Activated naive CD4-positive, alpha-beta T cell treated with anti-CD3 and anti-CD28 coated beads for 36 hours (primary cell): ENCODE measurements at regions of chr5 and their contacts with region 1.

Region 1: GRCh38 chr5:150000256-150000989 is at the starts of genes HMGXB3 and TIGD6:
- DNase-seq: peak; percentile 91
- H3K4me3 Mint-ChIP-seq: peak within 1 kb of the TSS; percentile 86
- H3K27ac Mint-ChIP-seq: peak within 1 kb of the TSS; percentile 85
- H3K4me1 Mint-ChIP-seq: peaks cover 39% of the 10 kb centered on the region
- H3K27me3 Mint-ChIP-seq: no peaks in the 10 kb centered on the region
- total RNA-seq, gene HMGXB3: 24.3 to 26.8 TPM
- total RNA-seq, gene TIGD6: 2.6 to 2.7 TPM

Region 2: GRCh38 chr5:148113243-148113642 is 1887.2 kb before region 1 on chr5:
- CTCF ChIA-PET with region 1: no interaction called
- intact Hi-C with region 1: no loop called
- DNase-seq: no peak
- H3K4me3 Mint-ChIP-seq: no peak overlapping the region
- H3K27ac Mint-ChIP-seq: no peak overlapping the region
- H3K4me1 Mint-ChIP-seq: no peaks in the 10 kb centered on the region
- H3K27me3 Mint-ChIP-seq: no peaks in the 10 kb centered on the region

Region 3: GRCh38 chr5:149357370-149358293 is 642.8 kb before region 1 on chr5 and contains the start of gene PCYOX1L:
- CTCF ChIA-PET with region 1: no interaction called
- intact Hi-C with region 1: loop called (anchors 1 kb)
- DNase-seq: peak; percentile 95
- H3K4me3 Mint-ChIP-seq: peak within 1 kb of the TSS; percentile 95
- H3K27ac Mint-ChIP-seq: peak within 1 kb of the TSS; percentile 90
- H3K4me1 Mint-ChIP-seq: peaks cover 61% of the 10 kb centered on the region
- H3K27me3 Mint-ChIP-seq: no peaks in the 10 kb centered on the region
- total RNA-seq, gene PCYOX1L: 19.9 to 21.0 TPM

Region 4: DNA sequence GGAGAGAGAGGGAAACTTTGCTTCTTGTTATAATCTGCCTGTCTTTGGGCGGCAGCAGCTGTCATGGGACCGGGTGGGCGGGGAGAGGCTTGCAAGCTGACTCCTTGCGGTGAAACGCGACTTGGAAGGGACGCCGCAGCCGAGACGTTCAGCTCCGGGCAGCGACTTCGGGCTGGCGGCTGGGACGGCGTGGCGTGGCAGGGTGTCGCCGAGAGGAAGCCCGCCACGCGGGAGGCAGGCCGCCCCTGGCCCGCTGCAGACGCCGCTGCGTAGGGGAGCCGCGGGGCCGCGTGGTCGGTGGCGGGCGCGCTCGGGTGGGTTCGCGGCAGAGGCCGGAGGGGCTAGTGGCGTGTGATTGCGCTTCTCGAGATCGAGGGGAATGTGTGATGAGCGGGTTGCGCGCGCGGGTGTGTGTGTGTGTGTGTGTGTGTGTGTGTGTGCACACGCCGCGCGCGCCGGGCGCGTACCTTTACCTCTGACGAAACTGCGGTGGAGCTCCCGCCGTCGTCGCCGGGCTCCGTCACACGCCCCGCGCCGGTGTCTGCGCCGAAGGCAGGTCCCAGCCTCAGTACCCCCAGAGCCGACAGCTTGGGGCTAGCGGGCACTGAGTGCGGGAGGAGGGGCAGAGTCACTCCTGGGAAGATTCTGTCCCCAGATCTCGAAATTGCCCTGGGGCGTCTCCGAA is 268.6 kb before region 1 on chr5:
- CTCF ChIA-PET with region 1: no interaction called
- intact Hi-C with region 1: loop called (anchors 2 kb)
- DNase-seq: peak; percentile 90
- H3K4me3 Mint-ChIP-seq: peak overlapping the region; percentile 81
- H3K27ac Mint-ChIP-seq: peak overlapping the region; percentile 56
- H3K4me1 Mint-ChIP-seq: peaks cover 4% of the 10 kb centered on the region
- H3K27me3 Mint-ChIP-seq: no peaks in the 10 kb centered on the region

Region 5: DNA sequence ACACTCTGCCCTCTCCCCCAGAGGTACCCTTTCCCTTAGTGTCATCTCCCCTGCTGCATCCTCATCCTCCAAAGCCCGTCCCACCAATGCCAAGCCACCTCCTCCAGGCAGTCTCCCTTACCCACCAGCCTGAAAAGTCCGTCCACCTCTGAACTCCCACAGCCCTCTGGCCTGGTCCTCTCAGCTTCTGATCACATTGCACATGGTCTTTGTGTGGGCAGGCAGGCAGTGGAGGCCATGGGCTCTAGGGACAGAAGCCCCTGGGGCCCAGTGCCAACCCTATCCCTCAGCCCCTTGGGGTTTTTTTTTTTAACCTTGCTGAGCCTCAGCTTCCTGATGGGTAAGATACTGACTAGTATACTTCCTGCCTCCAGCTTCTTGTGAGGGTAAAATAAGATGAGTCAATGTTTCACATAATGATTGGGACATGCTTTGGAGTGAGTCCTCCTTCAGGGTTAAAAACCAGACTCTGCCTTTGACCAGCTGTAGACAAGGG is 66.5 kb after region 1 on chr5:
- CTCF ChIA-PET with region 1: no interaction called
- intact Hi-C with region 1: loop called (anchors 1 kb)
- DNase-seq: no peak
- H3K4me3 Mint-ChIP-seq: no peak overlapping the region
- H3K27ac Mint-ChIP-seq: peak overlapping the region; percentile 44
- H3K4me1 Mint-ChIP-seq: peaks cover 12% of the 10 kb centered on the region
- H3K27me3 Mint-ChIP-seq: no peaks in the 10 kb centered on the region

Region 6: GRCh38 chr5:150092159-150092787 is 91.8 kb after region 1 on chr5:
- CTCF ChIA-PET with region 1: no interaction called
- intact Hi-C with region 1: loop called (anchors 1 kb)
- DNase-seq: no peak
- H3K4me3 Mint-ChIP-seq: no peak overlapping the region
- H3K27ac Mint-ChIP-seq: peak overlapping the region; percentile 79
- H3K4me1 Mint-ChIP-seq: peaks cover 15% of the 10 kb centered on the region
- H3K27me3 Mint-ChIP-seq: peaks cover 16% of the 10 kb centered on the region

Region 7: DNA sequence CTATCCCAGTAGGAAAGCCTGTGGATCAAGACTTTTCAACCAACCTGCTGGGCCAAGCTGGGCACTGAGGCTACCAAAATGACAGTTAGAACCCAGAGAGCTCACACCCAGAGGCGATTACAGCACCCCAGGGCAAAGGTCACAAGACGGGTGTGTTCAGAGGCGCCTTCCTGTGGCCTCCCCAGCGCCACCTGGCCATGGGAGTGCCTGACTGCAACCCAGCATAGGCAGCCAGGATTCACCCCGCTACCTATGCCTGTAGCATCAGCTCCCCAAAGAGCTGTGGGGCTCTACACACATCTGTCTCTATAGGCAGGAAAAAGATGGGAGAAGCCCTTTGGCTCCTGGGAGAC is 121.7 kb after region 1 on chr5:
- CTCF ChIA-PET with region 1: interaction called, 3 read pairs
- intact Hi-C with region 1: loop called (anchors 1 kb)
- DNase-seq: peak; percentile 60
- H3K4me3 Mint-ChIP-seq: no peak overlapping the region
- H3K27ac Mint-ChIP-seq: no peak overlapping the region
- H3K4me1 Mint-ChIP-seq: no peaks in the 10 kb centered on the region
- H3K27me3 Mint-ChIP-seq: no peaks in the 10 kb centered on the region

Region 8: GRCh38 chr5:150357326-150358260 is 357.2 kb after region 1 on chr5 and contains the start of gene TCOF1:
- CTCF ChIA-PET with region 1: no interaction called
- intact Hi-C with region 1: loop called (anchors 1 kb)
- DNase-seq: peak; percentile 98
- H3K4me3 Mint-ChIP-seq: peak within 1 kb of the TSS; percentile 87
- H3K27ac Mint-ChIP-seq: peak within 1 kb of the TSS; percentile 82
- H3K4me1 Mint-ChIP-seq: peaks cover 41% of the 10 kb centered on the region
- H3K27me3 Mint-ChIP-seq: no peaks in the 10 kb centered on the region
- total RNA-seq, gene TCOF1: 114 to 115 TPM